ENCODE measurements at regions of chr22 and their contacts with region 1.

Region 1: DNA sequence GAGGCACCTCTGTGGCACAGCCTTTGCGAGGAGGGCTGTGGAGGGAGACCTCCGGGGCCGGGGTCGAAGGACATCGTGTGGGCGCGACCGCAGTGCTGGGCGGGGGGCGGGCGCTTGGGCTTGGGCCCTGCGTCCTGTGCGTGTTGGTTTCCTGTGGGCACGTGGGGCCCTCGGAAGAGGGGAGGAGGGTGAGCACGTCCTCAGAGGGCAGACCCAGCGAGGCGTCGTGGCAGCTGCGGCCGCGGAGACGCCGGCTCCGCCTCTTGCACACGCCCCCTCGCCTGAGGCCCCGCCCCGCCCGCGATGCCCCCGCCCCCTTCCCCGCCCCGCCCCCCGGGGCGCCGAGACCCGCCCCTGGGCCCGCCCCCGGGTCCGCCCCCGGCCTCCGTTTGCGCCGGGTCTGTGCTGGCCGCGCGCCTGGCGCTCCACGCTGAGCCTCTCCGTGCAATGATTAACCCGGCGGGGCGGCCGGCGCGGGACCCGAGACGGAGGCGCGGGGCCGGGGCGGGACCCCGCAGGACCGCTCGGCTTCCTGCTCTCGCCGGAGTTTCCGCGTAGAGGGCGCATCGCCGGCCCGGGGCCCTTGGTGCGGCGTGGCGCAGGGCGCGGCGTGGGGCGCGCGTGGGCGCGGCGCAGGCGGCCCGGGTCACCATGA is at the start of gene PRR5:
- DNase-seq: peak; percentile 90
- ATAC-seq: peak; percentile 92
- H3K4me3 ChIP-seq: peak within 1 kb of the TSS in 4 of 5 experiments; percentile 25 to 82 (median 60)
- H3K4me3 Mint-ChIP-seq: peak within 1 kb of the TSS; percentile 80
- H3K27ac ChIP-seq: peak within 1 kb of the TSS; percentile 61 to 66
- H3K27ac Mint-ChIP-seq: peak within 1 kb of the TSS; percentile 84
- H3K4me1 ChIP-seq: peaks cover 17 to 23% of the 10 kb centered on the region in 2 donors
- H3K4me1 Mint-ChIP-seq: peaks cover 14% of the 10 kb centered on the region
- H3K27me3 ChIP-seq: peaks cover 0 to 4% (median 0%) of the 10 kb centered on the region in 4 experiments
- H3K27me3 Mint-ChIP-seq: no peaks in the 10 kb centered on the region
- CTCF ChIP-seq: no peak
- total RNA-seq, gene PRR5: 34.3 and 36.1 TPM in 2 replicates

Region 2: DNA sequence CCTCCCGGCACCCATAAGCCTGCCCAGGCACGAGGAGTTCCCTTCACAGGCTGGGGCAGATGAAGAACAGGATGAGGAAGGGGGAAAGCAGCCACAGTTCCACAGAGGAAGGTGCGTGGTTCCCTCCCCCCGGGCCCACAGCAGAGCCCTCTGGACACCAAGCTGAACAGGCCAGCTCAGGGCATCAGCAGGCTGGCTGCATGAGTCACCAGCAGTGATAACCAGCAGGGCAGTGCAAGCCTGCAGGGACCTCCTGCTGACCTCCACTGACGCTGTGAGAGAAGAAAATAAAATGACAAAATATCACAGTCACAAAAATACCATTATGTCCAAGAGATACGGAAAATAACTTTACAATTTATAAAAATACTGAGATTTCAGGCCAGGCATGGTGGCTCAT is 215.4 kb before region 1 on chr22:
- CTCF ChIA-PET with region 1: no interaction called
- POLR2A ChIA-PET with region 1: no interaction called
- intact Hi-C with region 1: no loop called
- DNase-seq: no peak
- ATAC-seq: no peak
- H3K4me3 ChIP-seq: no peak overlapping the region
- H3K4me3 Mint-ChIP-seq: no peak overlapping the region
- H3K27ac ChIP-seq: no peak overlapping the region
- H3K27ac Mint-ChIP-seq: no peak overlapping the region
- H3K4me1 ChIP-seq: no peaks in the 10 kb centered on the region
- H3K4me1 Mint-ChIP-seq: no peaks in the 10 kb centered on the region
- H3K27me3 ChIP-seq: no peaks in the 10 kb centered on the region
- H3K27me3 Mint-ChIP-seq: no peaks in the 10 kb centered on the region
- CTCF ChIP-seq: no peak

Region 3: GRCh38 chr22:44669561-44669976 is 32.4 kb before region 1 on chr22:
- CTCF ChIA-PET with region 1: no interaction called
- POLR2A ChIA-PET with region 1: no interaction called
- intact Hi-C with region 1: loop called (anchors 5 kb)
- DNase-seq: no peak
- ATAC-seq: no peak
- H3K4me3 ChIP-seq: peak overlapping the region in 1 of 5 experiments; percentile 51
- H3K4me3 Mint-ChIP-seq: peak overlapping the region; percentile 73
- H3K27ac ChIP-seq: no peak overlapping the region
- H3K27ac Mint-ChIP-seq: no peak overlapping the region
- H3K4me1 ChIP-seq: peaks cover 19 to 25% of the 10 kb centered on the region in 2 donors
- H3K4me1 Mint-ChIP-seq: peaks cover 23% of the 10 kb centered on the region
- H3K27me3 ChIP-seq: peaks cover 0 to 34% (median 10%) of the 10 kb centered on the region in 4 experiments
- H3K27me3 Mint-ChIP-seq: peaks cover 22% of the 10 kb centered on the region
- CTCF ChIP-seq: no peak

Region 4: GRCh38 chr22:44735540-44736488 is 33.9 kb after region 1 on chr22:
- CTCF ChIA-PET with region 1: interaction called, 72 read pairs
- POLR2A ChIA-PET with region 1: no interaction called
- intact Hi-C with region 1: no loop called
- DNase-seq: peak; percentile 83
- ATAC-seq: peak; percentile 86
- H3K4me3 ChIP-seq: no peak overlapping the region
- H3K4me3 Mint-ChIP-seq: no peak overlapping the region
- H3K27ac ChIP-seq: no peak overlapping the region
- H3K27ac Mint-ChIP-seq: no peak overlapping the region
- H3K4me1 ChIP-seq: peaks cover 0 to 3% of the 10 kb centered on the region in 2 donors
- H3K4me1 Mint-ChIP-seq: no peaks in the 10 kb centered on the region
- H3K27me3 ChIP-seq: no peaks in the 10 kb centered on the region
- H3K27me3 Mint-ChIP-seq: no peaks in the 10 kb centered on the region
- CTCF ChIP-seq: peak; percentile 96